MCF 10A (cell line): ENCODE measurements at regions of chr5 and their contacts with region 1.

Region 1: DNA sequence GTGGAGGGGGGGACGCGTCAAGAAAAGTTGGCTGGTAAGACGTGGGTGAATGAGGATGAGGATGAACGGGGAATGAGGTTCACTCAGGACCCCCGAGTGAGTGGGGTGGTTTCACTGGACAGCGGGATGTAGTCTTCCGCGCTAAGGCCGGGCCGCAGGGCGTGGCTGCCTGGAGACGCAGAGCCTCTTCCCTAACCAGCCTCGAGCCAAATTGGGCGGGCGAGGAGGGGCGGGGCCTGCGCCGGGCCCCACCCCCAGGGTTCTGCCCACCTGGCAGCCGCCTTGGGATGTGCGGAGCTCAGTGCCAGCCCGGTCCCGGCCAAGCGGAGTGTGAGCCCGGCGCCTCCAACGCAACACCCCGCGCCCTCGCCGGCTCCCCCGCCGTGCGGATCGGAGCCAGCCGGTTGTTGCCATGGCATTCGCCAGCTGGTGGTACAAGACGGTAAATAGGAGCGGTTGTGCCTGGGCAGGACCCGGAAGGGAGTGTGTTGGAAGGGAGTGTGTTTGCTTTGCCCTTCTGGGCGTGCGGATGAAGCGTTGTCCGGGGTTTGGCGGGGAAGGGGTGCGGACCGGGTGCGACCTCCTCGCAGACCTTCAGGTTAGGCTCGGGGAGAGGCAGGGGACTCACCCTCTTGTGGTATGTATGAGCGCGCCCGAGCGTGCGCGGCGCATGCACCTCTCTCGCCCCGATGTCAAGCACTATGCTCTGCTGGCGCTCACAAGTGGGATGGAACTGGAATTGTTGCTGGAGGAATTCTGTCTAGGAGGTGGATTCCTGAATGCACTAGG is 743 bp downstream of the CAST start:
- DNase-seq: peak; percentile 95
- H3K4me3 Mint-ChIP-seq: peak overlapping the region; percentile 76
- H3K27ac Mint-ChIP-seq: peak overlapping the region; percentile 91
- H3K4me1 Mint-ChIP-seq: peaks cover 20% of the 10 kb centered on the region
- H3K27me3 Mint-ChIP-seq: no peaks in the 10 kb centered on the region
- CTCF ChIP-seq: no peak

Region 2: DNA sequence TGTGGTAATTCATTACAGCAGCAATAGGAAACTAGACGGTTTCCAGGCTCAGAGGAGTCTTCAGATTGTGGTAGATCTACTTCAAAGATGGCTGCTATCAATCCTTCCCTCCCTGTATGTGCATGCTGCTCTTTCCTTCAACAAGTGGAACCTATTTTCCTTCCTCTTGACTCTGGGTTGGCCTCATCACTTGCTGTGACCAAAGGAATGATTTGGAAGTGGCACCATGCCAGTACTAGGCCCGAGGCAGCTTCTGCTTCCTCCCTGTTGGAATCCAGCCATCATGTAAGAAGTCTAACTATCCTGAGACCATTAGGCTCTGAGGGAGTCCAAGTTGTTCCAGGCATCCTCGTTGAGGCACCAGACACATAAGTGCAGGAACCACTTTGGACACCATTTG is 1331.6 kb before region 1 on chr5:
- CTCF ChIA-PET with region 1: no interaction called
- POLR2A ChIA-PET with region 1: no interaction called
- intact Hi-C with region 1: no loop called
- DNase-seq: peak; percentile 59
- H3K4me3 Mint-ChIP-seq: no peak overlapping the region
- H3K27ac Mint-ChIP-seq: no peak overlapping the region
- H3K4me1 Mint-ChIP-seq: peaks cover 7% of the 10 kb centered on the region
- H3K27me3 Mint-ChIP-seq: peaks cover 20% of the 10 kb centered on the region
- CTCF ChIP-seq: no peak

Region 3: DNA sequence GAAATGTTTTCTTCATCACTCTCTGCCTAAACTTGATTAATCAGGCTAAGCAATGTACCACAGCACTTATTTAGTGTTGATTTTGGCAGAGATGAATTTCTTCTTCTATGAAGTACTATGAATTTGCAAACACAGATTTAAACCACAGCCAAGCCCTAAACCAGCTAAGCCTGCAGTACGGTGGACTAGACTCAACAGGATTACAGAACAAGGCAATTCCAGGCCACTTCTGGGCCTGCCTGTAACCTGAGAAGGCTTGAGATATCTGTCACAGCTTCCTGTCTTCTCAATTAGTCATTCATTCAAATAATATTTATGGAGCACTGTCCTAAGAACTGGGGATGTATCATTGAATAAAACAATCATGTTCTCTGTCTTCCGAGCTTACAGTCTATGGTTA is 33.1 kb before region 1 on chr5:
- CTCF ChIA-PET with region 1: interaction called, 4 read pairs
- POLR2A ChIA-PET with region 1: interaction called, 107 read pairs
- intact Hi-C with region 1: no loop called
- DNase-seq: peak; percentile 95
- H3K4me3 Mint-ChIP-seq: peak overlapping the region; percentile 3
- H3K27ac Mint-ChIP-seq: peak overlapping the region; percentile 89
- H3K4me1 Mint-ChIP-seq: peaks cover 31% of the 10 kb centered on the region
- H3K27me3 Mint-ChIP-seq: no peaks in the 10 kb centered on the region
- CTCF ChIP-seq: no peak

Region 4: GRCh38 chr5:96673127-96673526 is 10.2 kb after region 1 on chr5:
- CTCF ChIA-PET with region 1: interaction called, 4 read pairs
- POLR2A ChIA-PET with region 1: interaction called, 24 read pairs
- intact Hi-C with region 1: no loop called
- DNase-seq: no peak
- H3K4me3 Mint-ChIP-seq: no peak overlapping the region
- H3K27ac Mint-ChIP-seq: no peak overlapping the region
- H3K4me1 Mint-ChIP-seq: peaks cover 9% of the 10 kb centered on the region
- H3K27me3 Mint-ChIP-seq: no peaks in the 10 kb centered on the region
- CTCF ChIP-seq: no peak

Region 5: DNA sequence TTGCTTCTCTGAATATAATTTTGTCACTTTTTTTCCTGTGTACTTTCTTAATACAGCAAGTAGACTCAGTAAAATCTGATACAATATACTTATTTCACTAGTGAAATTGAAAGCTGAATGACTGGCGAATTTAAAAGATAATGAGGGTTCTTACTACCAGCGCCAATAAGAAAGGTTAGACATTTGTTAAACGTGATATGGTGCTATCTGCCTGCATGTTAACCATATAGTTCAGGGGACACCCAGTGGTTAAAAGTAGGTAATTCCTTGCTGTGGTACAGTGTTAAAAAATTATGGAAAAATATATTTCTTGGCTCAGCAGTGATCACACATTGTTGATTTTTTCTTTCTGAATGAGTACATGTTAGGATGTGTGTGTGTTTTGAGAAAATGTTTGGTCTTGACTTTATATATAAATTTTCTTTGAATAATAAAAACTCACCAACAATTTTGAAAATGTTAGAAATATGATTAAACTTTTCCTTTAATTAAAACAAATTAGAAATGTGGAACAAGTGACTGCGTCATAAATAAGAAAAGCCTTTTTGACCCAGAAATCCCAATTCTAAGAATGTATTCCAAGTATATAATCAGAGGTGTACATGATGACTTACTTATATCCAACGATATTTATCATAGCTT is 25.0 kb after region 1 on chr5:
- CTCF ChIA-PET with region 1: interaction called, 28 read pairs
- POLR2A ChIA-PET with region 1: interaction called, 79 read pairs
- intact Hi-C with region 1: loop called (anchors 2 kb)
- DNase-seq: peak; percentile 66
- H3K4me3 Mint-ChIP-seq: peak overlapping the region; percentile 55
- H3K27ac Mint-ChIP-seq: peak overlapping the region; percentile 4
- H3K4me1 Mint-ChIP-seq: peaks cover 38% of the 10 kb centered on the region
- H3K27me3 Mint-ChIP-seq: no peaks in the 10 kb centered on the region
- CTCF ChIP-seq: peak; percentile 49

Region 6: GRCh38 chr5:96709152-96709821 is 46.4 kb after region 1 on chr5:
- CTCF ChIA-PET with region 1: interaction called, 4 read pairs
- POLR2A ChIA-PET with region 1: interaction called, 169 read pairs
- intact Hi-C with region 1: loop called (anchors 5 kb)
- DNase-seq: peak; percentile 49
- H3K4me3 Mint-ChIP-seq: peak overlapping the region; percentile 8
- H3K27ac Mint-ChIP-seq: peak overlapping the region; percentile 63
- H3K4me1 Mint-ChIP-seq: peaks cover 45% of the 10 kb centered on the region
- H3K27me3 Mint-ChIP-seq: no peaks in the 10 kb centered on the region
- CTCF ChIP-seq: no peak

Region 7: DNA sequence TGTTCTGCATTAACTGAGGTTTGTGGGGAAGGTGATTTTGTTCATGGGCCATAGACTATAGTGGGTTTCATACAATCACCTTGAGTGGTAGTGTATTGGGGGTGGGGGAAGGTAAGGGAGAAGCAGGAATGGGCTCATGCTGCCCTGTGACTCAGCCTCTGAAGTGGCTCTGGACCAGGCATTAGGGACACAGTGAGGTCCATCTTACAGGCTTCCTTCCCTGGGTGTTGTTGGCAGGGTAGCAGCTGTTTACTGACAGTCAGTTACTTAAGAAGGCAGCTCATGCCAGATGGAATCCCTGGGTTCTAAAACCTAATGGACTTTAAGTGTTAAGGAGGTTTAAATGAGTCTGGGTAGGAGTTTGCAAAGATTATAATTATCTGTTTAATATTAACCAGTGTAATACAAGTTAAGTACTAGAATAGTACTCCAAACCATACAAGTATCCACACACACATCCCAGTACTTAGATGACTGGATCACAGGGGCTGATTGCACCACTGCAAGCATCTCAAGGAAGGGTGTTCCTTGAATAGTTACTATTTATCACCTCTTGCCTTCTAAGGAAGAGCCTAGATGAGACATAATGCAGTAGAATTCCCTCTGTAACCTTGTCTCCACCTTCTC is 58.5 kb after region 1 on chr5:
- CTCF ChIA-PET with region 1: no interaction called
- POLR2A ChIA-PET with region 1: interaction called, 11 read pairs
- intact Hi-C with region 1: no loop called
- DNase-seq: peak; percentile 39
- H3K4me3 Mint-ChIP-seq: no peak overlapping the region
- H3K27ac Mint-ChIP-seq: peak overlapping the region; percentile 35
- H3K4me1 Mint-ChIP-seq: peaks cover 38% of the 10 kb centered on the region
- H3K27me3 Mint-ChIP-seq: no peaks in the 10 kb centered on the region
- CTCF ChIP-seq: no peak